Posterior cingulate gyrus (tissue), 11 donors: ENCODE measurements at regions of chr1 and their contacts with region 1.

Region 1: GRCh38 chr1:65431111-65431705 is 10.7 kb downstream of the LEPR start:
- DNase-seq: no peak

Region 2: DNA sequence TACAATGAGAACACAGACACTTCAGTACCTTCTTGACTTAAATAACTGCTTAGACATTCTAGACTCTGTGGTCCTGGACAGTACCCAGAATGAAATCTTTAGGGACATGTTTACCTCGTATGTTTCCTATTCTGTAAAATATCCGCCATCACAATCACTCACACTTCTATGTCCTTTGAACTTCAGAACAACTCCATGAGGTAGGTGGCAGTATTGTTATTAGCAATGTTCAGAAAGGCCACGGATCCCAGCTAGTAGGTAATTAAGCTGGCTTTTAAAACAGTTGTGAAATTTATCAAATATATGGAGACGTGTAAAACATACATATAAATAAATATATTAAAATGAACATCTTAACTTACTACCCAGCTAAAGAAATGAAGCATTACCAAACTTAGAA is 877.9 kb before region 1 on chr1:
- intact Hi-C with region 1: no loop called
- DNase-seq: no peak

Region 3: GRCh38 chr1:65243491-65243890 is 187.7 kb before region 1 on chr1:
- intact Hi-C with region 1: loop called (anchors 5 kb)
- DNase-seq: no peak